ENCODE measurements at regions of chr7 and their contacts with region 1.

Region 1: DNA sequence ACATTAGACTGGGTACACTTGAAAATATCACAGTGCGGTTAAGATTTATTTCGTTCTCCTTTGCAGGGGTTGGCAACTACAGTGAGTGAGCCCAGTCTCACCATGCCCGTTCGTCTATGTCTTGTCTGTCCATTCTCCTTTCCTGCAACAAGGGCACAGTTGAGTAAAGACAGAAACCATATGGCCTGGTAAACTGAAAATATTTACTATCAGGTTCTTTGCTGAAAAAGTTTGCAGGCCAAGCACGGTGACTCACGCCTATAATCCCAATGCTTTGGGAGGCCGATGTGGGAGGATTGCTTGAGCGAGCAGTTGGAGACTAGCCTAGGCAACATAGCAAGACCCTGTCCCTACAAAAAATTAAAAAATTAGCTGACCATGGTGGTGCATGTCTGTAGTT is 11.4 kb upstream of the KCTD7 start:
- DNase-seq: no peak
- ATAC-seq: no peak
- H3K4me3 ChIP-seq: no peak overlapping the region
- H3K27ac ChIP-seq: no peak overlapping the region
- H3K4me1 ChIP-seq: no peaks in the 10 kb centered on the region
- H3K27me3 ChIP-seq: no peaks in the 10 kb centered on the region
- CTCF ChIP-seq: no peak

Region 2: GRCh38 chr7:66638309-66639099 is 21.2 kb after region 1 on chr7:
- intact Hi-C with region 1: loop called in 1 of 10 experiments (anchors 2 kb)
- DNase-seq: no peak
- ATAC-seq: no peak
- H3K4me3 ChIP-seq: no peak overlapping the region
- H3K27ac ChIP-seq: no peak overlapping the region
- H3K4me1 ChIP-seq: peaks cover 0 to 25% (median 8%) of the 10 kb centered on the region in 9 donors
- H3K27me3 ChIP-seq: no peaks in the 10 kb centered on the region
- CTCF ChIP-seq: no peak

Measured in heart right ventricle (tissue), 16 donors.